GM18951 (cell line): ENCODE measurements at regions of chr10 and their contacts with region 1.

Region 1: GRCh38 chr10:107413971-107414370 is 249.5 kb upstream of the SORCS1 start:
- POLR2A ChIP-seq: no peak

Region 2: DNA sequence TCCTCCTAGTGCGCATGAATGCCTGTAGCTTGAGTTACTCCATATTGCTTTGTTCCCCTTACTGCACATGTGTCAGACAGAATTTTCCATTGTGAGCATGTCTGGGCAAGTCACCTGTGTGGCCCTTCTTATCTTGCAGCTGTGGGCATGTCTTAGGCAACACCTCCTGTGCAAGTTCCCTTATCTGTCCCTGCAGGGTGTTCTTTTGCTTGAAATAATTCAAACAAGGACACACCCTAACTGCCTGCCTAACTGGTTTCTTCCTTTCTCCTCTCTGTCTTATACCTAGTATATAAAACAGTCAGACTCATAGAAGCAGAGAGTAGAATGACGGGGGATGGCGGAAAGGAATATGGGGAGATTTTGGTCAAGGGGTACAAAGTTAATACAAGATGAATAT is 171.7 kb after region 1 on chr10:
- in situ Hi-C with region 1: no loop called
- POLR2A ChIP-seq: no peak

Region 3: GRCh38 chr10:107814865-107815487 is 401.0 kb after region 1 on chr10:
- in situ Hi-C with region 1: loop called (anchors 5 kb)
- POLR2A ChIP-seq: no peak